ENCODE measurements at regions of chr14 and their contacts with region 1.

Region 1: GRCh38 chr14:100383727-100384158 is 60.6 kb downstream of the SLC25A47 start:
- DNase-seq: peak; percentile 82
- ATAC-seq: peak; percentile 97
- H3K4me3 Mint-ChIP-seq: no peak overlapping the region
- H3K27ac Mint-ChIP-seq: no peak overlapping the region
- H3K4me1 Mint-ChIP-seq: peaks cover 4% of the 10 kb centered on the region
- H3K27me3 Mint-ChIP-seq: no peaks in the 10 kb centered on the region

Region 2: GRCh38 chr14:100234511-100234910 is 149.2 kb before region 1 on chr14:
- CTCF ChIA-PET with region 1: no interaction called
- POLR2A ChIA-PET with region 1: no interaction called
- intact Hi-C with region 1: no loop called
- DNase-seq: peak; percentile 36
- ATAC-seq: no peak
- H3K4me3 Mint-ChIP-seq: no peak overlapping the region
- H3K27ac Mint-ChIP-seq: peak overlapping the region; percentile 51
- H3K4me1 Mint-ChIP-seq: peaks cover 49% of the 10 kb centered on the region
- H3K27me3 Mint-ChIP-seq: no peaks in the 10 kb centered on the region

Region 3: DNA sequence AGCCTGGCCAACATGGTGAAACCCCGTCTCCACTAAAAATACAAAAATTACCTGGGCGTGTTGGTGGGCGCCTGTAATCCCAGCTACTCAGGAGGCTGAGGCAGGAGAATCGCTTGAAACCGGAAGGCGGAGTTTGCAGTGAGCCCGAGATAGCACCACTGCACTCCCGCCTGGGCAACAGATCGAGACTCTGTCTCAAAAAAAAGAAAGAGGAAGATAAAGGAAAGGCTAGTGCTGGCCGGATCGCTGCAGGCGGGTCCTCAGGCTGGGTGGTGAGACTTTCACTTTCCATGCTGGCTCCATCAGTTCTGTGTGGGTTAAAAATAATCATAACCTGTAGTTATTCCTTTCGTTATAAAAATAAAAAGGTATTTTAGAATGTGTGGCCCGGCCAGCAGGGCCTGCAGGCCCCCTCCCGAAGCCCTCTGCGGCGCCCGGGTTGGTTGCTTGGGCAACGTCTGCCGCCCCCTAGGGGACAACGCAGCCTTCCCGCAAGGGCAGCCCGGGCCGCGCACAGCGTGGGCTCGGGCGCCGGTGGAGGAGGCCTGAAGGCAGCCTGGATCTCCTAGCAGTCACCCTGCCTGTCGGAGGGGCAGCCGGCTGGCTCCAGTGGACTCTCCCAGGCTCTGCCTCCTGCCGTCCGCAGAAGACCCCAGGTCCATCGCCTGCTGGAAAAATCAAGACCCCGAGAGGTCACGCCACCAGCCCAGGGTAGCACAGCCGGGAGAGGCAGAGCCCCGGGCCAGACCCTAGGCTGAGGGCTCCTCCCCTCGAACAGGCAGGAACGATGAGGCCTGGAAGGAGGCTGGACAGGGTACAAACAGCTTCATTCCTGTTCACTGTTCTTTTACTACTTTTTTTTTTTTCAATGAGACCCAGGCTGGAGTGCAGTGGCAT is 65.6 kb before region 1 on chr14:
- CTCF ChIA-PET with region 1: interaction called, 3 read pairs
- POLR2A ChIA-PET with region 1: interaction called, 10 read pairs
- intact Hi-C with region 1: no loop called
- DNase-seq: peak; percentile 85
- ATAC-seq: peak; percentile 98
- H3K4me3 Mint-ChIP-seq: peak overlapping the region; percentile 50
- H3K27ac Mint-ChIP-seq: peak overlapping the region; percentile 63
- H3K4me1 Mint-ChIP-seq: peaks cover 7% of the 10 kb centered on the region
- H3K27me3 Mint-ChIP-seq: no peaks in the 10 kb centered on the region

Region 4: GRCh38 chr14:100440187-100440631 is 56.5 kb after region 1 on chr14:
- CTCF ChIA-PET with region 1: interaction called, 19 read pairs
- POLR2A ChIA-PET with region 1: no interaction called
- intact Hi-C with region 1: no loop called
- DNase-seq: peak; percentile 68
- ATAC-seq: no peak
- H3K4me3 Mint-ChIP-seq: no peak overlapping the region
- H3K27ac Mint-ChIP-seq: no peak overlapping the region
- H3K4me1 Mint-ChIP-seq: peaks cover 36% of the 10 kb centered on the region
- H3K27me3 Mint-ChIP-seq: no peaks in the 10 kb centered on the region

Region 5: GRCh38 chr14:100524933-100525243 is 141.1 kb after region 1 on chr14:
- CTCF ChIA-PET with region 1: no interaction called
- POLR2A ChIA-PET with region 1: no interaction called
- intact Hi-C with region 1: loop called (anchors 5 to 10 kb)
- DNase-seq: peak; percentile 74
- ATAC-seq: peak; percentile 65
- H3K4me3 Mint-ChIP-seq: no peak overlapping the region
- H3K27ac Mint-ChIP-seq: no peak overlapping the region
- H3K4me1 Mint-ChIP-seq: no peaks in the 10 kb centered on the region
- H3K27me3 Mint-ChIP-seq: no peaks in the 10 kb centered on the region

Region 6: GRCh38 chr14:100654814-100655740 is 271.3 kb after region 1 on chr14:
- CTCF ChIA-PET with region 1: interaction called, 68 read pairs
- POLR2A ChIA-PET with region 1: no interaction called
- intact Hi-C with region 1: loop called (anchors 1 to 2 kb)
- DNase-seq: peak; percentile 59
- ATAC-seq: peak; percentile 78
- H3K4me3 Mint-ChIP-seq: no peak overlapping the region
- H3K27ac Mint-ChIP-seq: no peak overlapping the region
- H3K4me1 Mint-ChIP-seq: peaks cover 7% of the 10 kb centered on the region
- H3K27me3 Mint-ChIP-seq: peaks cover 6% of the 10 kb centered on the region

Measured in activated CD4-positive, alpha-beta T cell treated with anti-CD3 and anti-CD28 coated beads for 36 hours (primary cell).